ENCODE measurements at regions of chr19 and their contacts with region 1.

Region 1: GRCh38 chr19:17511724-17512573 is 500 bp downstream of the PGLS start:
- DNase-seq: peak; percentile 75 to 93 (median 90)
- ATAC-seq: peak; percentile 89
- H3K4me3 ChIP-seq: peak overlapping the region; percentile 75
- H3K4me3 Mint-ChIP-seq: peak overlapping the region; percentile 89 to 100 (median 99)
- H3K27ac ChIP-seq: peak overlapping the region; percentile 98
- H3K27ac Mint-ChIP-seq: peak overlapping the region; percentile 86 to 96 (median 92)
- H3K4me1 ChIP-seq: peaks cover 0 to 20% of the 10 kb centered on the region in 2 donors
- H3K4me1 Mint-ChIP-seq: peaks cover 26 to 46% (median 41%) of the 10 kb centered on the region in 7 donors
- H3K27me3 ChIP-seq: no peaks in the 10 kb centered on the region
- H3K27me3 Mint-ChIP-seq: no peaks in the 10 kb centered on the region

Region 2: DNA sequence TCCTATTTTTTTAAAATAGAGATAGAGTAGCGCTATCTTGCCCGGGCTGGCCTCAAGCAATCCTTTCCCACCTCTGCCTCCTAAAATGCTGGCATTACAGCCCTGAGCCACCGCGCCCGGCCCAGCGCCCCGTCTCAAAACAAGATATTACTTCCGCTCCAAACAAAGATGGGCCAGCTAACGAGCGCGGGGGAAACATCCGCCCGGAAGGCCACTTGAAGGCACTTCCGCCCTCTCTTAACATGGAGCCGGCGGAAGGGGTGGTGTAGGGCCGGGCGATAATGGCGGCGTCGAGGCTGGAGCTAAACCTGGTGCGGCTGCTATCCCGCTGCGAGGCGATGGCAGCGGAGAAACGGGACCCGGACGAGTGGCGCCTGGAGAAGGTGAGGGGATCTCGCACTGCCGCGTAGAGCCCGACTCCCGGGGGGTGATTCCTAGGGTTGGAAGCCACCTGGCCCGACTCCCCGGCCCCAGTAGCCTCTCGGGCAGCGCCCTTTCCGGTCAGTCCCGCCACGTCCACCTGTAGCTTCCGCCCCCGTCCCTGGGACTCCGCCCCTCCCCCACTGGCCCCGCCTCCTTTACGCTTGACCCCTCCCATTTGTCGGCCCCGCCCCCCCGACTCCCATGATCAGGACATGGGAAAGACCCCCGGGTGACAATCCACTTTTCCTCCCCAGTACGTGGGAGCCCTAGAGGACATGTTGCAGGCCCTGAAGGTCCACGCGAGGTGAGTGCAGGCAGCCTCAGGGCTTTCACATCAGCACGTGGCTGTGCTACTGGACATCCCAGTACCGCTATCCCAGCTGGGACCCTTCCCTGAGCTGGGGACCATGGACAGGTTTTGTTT is 296.6 kb before region 1 on chr19 and contains the start of gene USE1:
- CTCF ChIA-PET with region 1: no interaction called
- POLR2A ChIA-PET with region 1: no interaction called
- intact Hi-C with region 1: loop called in 1 of 2 experiments (anchors 1 kb)
- DNase-seq: peak; percentile 70 to 91 (median 89)
- ATAC-seq: peak; percentile 97
- H3K4me3 ChIP-seq: peak within 1 kb of the TSS; percentile 92
- H3K4me3 Mint-ChIP-seq: peak within 1 kb of the TSS; percentile 83 to 99 (median 90)
- H3K27ac ChIP-seq: peak within 1 kb of the TSS; percentile 89
- H3K27ac Mint-ChIP-seq: peak within 1 kb of the TSS; percentile 97 to 100 (median 99)
- H3K4me1 ChIP-seq: peaks cover 13 to 16% of the 10 kb centered on the region in 2 donors
- H3K4me1 Mint-ChIP-seq: peaks cover 0 to 16% (median 12%) of the 10 kb centered on the region in 7 donors
- H3K27me3 ChIP-seq: no peaks in the 10 kb centered on the region
- H3K27me3 Mint-ChIP-seq: no peaks in the 10 kb centered on the region
- total RNA-seq, gene USE1: 24.7 to 51.1 (median 30.5) TPM

Region 3: GRCh38 chr19:17405250-17406038 is 106.5 kb before region 1 on chr19 and contains the start of gene BST2:
- CTCF ChIA-PET with region 1: no interaction called
- POLR2A ChIA-PET with region 1: no interaction called
- intact Hi-C with region 1: loop called in 1 of 2 experiments (anchors 5 kb)
- DNase-seq: peak in 6 of 9 donors; percentile 20 to 69 (median 50)
- ATAC-seq: peak; percentile 90
- H3K4me3 ChIP-seq: peak within 1 kb of the TSS; percentile 81
- H3K4me3 Mint-ChIP-seq: peak within 1 kb of the TSS; percentile 80 to 98 (median 95)
- H3K27ac ChIP-seq: peak within 1 kb of the TSS; percentile 83
- H3K27ac Mint-ChIP-seq: peak within 1 kb of the TSS; percentile 81 to 98 (median 88)
- H3K4me1 ChIP-seq: peaks cover 0 to 12% of the 10 kb centered on the region in 2 donors
- H3K4me1 Mint-ChIP-seq: peaks cover 20 to 47% (median 35%) of the 10 kb centered on the region in 7 donors
- H3K27me3 ChIP-seq: no peaks in the 10 kb centered on the region
- H3K27me3 Mint-ChIP-seq: peaks cover 0 to 2% (median 0%) of the 10 kb centered on the region in 5 donors
- total RNA-seq, gene BST2: 29.9 to 221 (median 57.1) TPM

Region 4: GRCh38 chr19:17488593-17489391 is 23.2 kb before region 1 on chr19:
- CTCF ChIA-PET with region 1: no interaction called
- POLR2A ChIA-PET with region 1: interaction called, 3 read pairs
- intact Hi-C with region 1: loop called in 1 of 2 experiments (anchors 2 kb)
- DNase-seq: peak in 8 of 9 donors; percentile 26 to 71 (median 58)
- ATAC-seq: peak; percentile 91
- H3K4me3 ChIP-seq: peak overlapping the region; percentile 50
- H3K4me3 Mint-ChIP-seq: peak overlapping the region; percentile 11 to 81 (median 76)
- H3K27ac ChIP-seq: peak overlapping the region; percentile 66
- H3K27ac Mint-ChIP-seq: peak overlapping the region; percentile 42 to 96 (median 85)
- H3K4me1 ChIP-seq: peaks cover 26 to 39% of the 10 kb centered on the region in 2 donors
- H3K4me1 Mint-ChIP-seq: peaks cover 18 to 51% (median 38%) of the 10 kb centered on the region in 7 donors
- H3K27me3 ChIP-seq: no peaks in the 10 kb centered on the region
- H3K27me3 Mint-ChIP-seq: no peaks in the 10 kb centered on the region

Region 5: DNA sequence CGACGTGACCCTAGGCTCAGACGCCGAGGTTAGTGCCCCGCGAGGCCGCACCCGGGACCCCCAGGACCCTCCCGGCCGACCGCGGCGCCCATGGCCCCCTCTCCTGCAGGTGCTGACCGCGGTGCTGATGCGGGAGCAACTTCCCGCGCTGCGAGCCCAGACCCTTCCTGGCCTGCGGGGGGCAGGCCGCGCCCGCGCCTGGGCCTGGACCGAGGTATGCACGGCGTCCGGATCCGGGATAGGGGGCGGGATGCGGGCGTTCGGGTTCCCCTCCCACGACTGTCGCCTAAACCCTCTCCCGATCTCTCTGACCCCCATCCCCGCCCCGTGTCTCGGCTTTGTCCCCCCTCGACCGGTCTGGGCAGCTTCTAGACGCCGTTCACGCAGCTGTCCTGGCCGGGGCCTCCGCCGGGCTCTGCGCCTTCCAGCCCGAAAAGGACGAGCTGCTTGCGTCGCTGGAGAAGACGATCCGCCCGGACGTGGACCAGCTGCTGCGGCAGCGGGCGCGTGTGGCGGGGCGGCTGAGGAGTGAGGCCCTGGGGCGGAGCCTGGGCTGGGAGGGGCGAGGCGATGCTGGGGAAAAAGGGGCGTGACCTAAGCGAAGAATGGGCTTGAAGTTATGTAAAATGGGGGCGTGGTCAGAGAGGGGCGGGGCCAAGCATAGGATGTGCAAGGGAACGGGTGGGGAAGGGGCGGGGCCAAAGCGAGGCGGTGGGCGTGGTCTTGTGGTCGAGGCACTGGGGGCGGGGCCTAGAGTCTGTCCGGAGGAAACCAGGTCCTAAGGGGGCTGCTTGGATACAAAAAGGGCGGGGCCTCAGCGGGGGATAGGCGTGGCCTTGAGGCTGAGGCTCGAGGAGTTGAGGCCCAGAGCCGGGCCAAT is 27.5 kb after region 1 on chr19:
- CTCF ChIA-PET with region 1: interaction called, 5 read pairs
- POLR2A ChIA-PET with region 1: interaction called, 8 read pairs
- intact Hi-C with region 1: loop called (anchors 1 kb)
- DNase-seq: peak; percentile 87 to 99 (median 94)
- ATAC-seq: peak; percentile 100
- H3K4me3 ChIP-seq: peak overlapping the region; percentile 68
- H3K4me3 Mint-ChIP-seq: peak overlapping the region; percentile 84 to 90 (median 86)
- H3K27ac ChIP-seq: peak overlapping the region; percentile 67
- H3K27ac Mint-ChIP-seq: peak overlapping the region; percentile 16 to 81 (median 62)
- H3K4me1 ChIP-seq: peaks cover 9 to 10% of the 10 kb centered on the region in 2 donors
- H3K4me1 Mint-ChIP-seq: peaks cover 7 to 23% (median 16%) of the 10 kb centered on the region in 7 donors
- H3K27me3 ChIP-seq: no peaks in the 10 kb centered on the region
- H3K27me3 Mint-ChIP-seq: peaks cover 0 to 34% (median 0%) of the 10 kb centered on the region in 5 donors

Region 6: GRCh38 chr19:17579661-17580244 is 67.8 kb after region 1 on chr19:
- CTCF ChIA-PET with region 1: no interaction called
- POLR2A ChIA-PET with region 1: interaction called, 3 read pairs
- intact Hi-C with region 1: loop called (anchors 1 to 5 kb)
- DNase-seq: peak in 3 of 9 donors; percentile 15 to 48 (median 30)
- ATAC-seq: peak; percentile 77
- H3K4me3 ChIP-seq: no peak overlapping the region
- H3K4me3 Mint-ChIP-seq: no peak overlapping the region
- H3K27ac ChIP-seq: no peak overlapping the region
- H3K27ac Mint-ChIP-seq: peak overlapping the region in 5 of 9 donors; percentile 37 to 68 (median 59)
- H3K4me1 ChIP-seq: no peaks in the 10 kb centered on the region
- H3K4me1 Mint-ChIP-seq: peaks cover 0 to 9% (median 0%) of the 10 kb centered on the region in 7 donors
- H3K27me3 ChIP-seq: no peaks in the 10 kb centered on the region
- H3K27me3 Mint-ChIP-seq: no peaks in the 10 kb centered on the region

Region 7: GRCh38 chr19:17932485-17933338 is 420.8 kb after region 1 on chr19 and contains the start of gene CCDC124:
- CTCF ChIA-PET with region 1: no interaction called
- POLR2A ChIA-PET with region 1: no interaction called
- intact Hi-C with region 1: loop called (anchors 2 to 5 kb)
- DNase-seq: peak; percentile 89 to 96 (median 94)
- ATAC-seq: peak; percentile 99
- H3K4me3 ChIP-seq: peak within 1 kb of the TSS; percentile 69
- H3K4me3 Mint-ChIP-seq: peak within 1 kb of the TSS; percentile 85 to 97 (median 93)
- H3K27ac ChIP-seq: peak within 1 kb of the TSS; percentile 86
- H3K27ac Mint-ChIP-seq: peak within 1 kb of the TSS; percentile 90 to 97 (median 95)
- H3K4me1 ChIP-seq: peaks cover 10 to 11% of the 10 kb centered on the region in 2 donors
- H3K4me1 Mint-ChIP-seq: peaks cover 6 to 24% (median 15%) of the 10 kb centered on the region in 7 donors
- H3K27me3 ChIP-seq: no peaks in the 10 kb centered on the region
- H3K27me3 Mint-ChIP-seq: peaks cover 0 to 2% (median 0%) of the 10 kb centered on the region in 5 donors
- total RNA-seq, gene CCDC124: 28.7 to 60.5 (median 32.6) TPM

Region 8: DNA sequence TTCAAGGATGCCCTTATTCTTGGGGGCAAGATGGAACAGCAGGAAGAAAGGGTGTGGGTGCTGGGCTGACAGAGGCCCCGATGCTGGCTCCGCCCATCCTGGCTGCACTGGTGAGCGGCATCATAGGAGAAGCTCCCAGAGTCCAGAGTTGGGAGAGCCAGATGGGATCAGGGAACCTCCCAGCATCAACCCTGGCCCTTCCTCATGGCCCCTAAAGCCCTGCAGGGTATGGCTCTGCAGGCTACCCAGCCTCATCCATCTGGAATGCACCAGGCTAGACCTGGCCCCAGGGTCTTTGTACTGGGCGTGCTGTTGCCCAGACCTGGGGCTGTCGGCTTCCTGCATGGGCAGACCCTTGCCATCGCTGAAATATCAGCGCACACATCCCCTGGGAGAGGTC is 1017.8 kb after region 1 on chr19:
- CTCF ChIA-PET with region 1: no interaction called
- POLR2A ChIA-PET with region 1: no interaction called
- intact Hi-C with region 1: no loop called
- DNase-seq: no peak
- ATAC-seq: no peak
- H3K4me3 ChIP-seq: no peak overlapping the region
- H3K4me3 Mint-ChIP-seq: no peak overlapping the region
- H3K27ac ChIP-seq: no peak overlapping the region
- H3K27ac Mint-ChIP-seq: no peak overlapping the region
- H3K4me1 ChIP-seq: no peaks in the 10 kb centered on the region
- H3K4me1 Mint-ChIP-seq: no peaks in the 10 kb centered on the region
- H3K27me3 ChIP-seq: no peaks in the 10 kb centered on the region
- H3K27me3 Mint-ChIP-seq: no peaks in the 10 kb centered on the region